Ovary (tissue), 10 donors: ENCODE measurements at regions of chr3 and their contacts with region 1.

Region 1: DNA sequence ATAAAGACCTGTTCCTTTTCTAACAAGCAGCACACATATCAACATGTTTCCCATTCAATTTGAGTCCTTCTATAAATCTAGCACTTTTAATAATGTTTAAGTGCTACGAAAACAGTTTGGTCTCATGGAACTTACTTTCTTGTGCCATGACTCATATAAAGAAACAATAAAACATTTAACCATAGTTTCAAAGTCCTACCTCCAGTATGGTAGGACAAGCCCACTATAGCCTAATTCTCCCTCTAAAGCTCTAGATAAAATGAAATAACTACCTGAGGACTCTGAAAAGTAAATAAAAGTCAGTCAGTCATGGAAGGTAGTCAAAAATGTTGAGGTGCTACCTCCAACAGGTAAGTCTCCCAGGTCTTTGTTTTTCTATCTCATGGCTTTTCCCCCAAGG is 12.0 kb upstream of the PIK3CA start:
- DNase-seq: no peak
- H3K4me3 ChIP-seq: no peak overlapping the region
- H3K27ac ChIP-seq: no peak overlapping the region
- H3K4me1 ChIP-seq: no peaks in the 10 kb centered on the region
- H3K27me3 ChIP-seq: no peaks in the 10 kb centered on the region
- CTCF ChIP-seq: no peak
- EP300 ChIP-seq: no peak
- POLR2A ChIP-seq: no peak

Region 2: DNA sequence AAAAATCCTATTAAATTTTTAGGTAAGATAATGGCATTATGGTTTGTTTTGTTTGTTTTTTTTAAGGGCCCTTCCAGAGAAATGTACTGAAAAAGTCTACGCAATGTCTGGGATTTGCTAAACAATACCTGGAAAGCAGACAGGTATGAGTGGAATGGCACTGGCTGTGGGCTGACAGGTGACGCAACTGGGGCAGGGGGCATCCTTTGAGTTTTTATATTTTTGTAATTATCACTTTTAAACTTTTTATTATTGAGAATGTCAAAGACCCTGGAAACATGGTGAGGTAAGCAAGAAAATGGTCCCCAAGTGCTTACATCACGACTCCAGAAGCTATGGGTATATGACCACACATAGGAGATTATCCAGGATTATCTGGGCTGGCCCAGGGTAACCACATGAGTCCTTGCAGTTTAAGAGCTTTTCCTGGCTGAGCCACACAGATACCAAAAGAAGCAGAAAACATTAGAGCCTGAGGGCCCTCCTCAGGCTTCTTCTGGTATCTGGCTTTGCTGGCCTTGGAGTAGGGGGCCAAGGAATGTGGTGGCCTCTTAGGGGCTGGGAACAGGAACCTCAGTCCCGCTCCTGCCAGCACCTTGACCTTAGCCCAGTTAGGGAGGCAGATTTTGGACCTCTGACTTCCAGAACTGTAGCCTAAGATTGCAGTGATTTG is 341.0 kb before region 1 on chr3:
- intact Hi-C with region 1: no loop called
- DNase-seq: no peak
- H3K4me3 ChIP-seq: no peak overlapping the region
- H3K27ac ChIP-seq: no peak overlapping the region
- H3K4me1 ChIP-seq: no peaks in the 10 kb centered on the region
- H3K27me3 ChIP-seq: no peaks in the 10 kb centered on the region
- CTCF ChIP-seq: no peak
- EP300 ChIP-seq: no peak
- POLR2A ChIP-seq: no peak

Region 3: DNA sequence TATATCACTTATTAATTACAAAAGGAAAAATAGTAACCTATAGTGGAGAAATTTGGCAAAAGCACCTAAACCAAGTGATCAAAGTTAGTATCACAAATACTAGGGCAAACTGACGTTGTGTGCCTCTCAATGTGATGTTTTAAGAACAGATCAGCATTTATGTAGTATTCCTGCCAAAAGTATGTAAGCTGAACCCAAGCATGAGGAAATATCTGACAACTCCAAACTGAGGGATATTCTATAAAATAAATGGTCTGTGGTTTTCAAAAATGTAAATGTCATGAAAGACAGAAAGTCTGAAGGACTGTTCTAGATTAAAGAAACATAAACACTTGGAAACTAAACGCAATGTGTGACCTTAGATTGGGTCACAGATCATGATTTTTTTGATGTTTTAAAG is 22.3 kb before region 1 on chr3:
- intact Hi-C with region 1: loop called in 1 of 4 experiments (anchors 2 kb)
- DNase-seq: no peak
- H3K4me3 ChIP-seq: no peak overlapping the region
- H3K27ac ChIP-seq: no peak overlapping the region
- H3K4me1 ChIP-seq: no peaks in the 10 kb centered on the region
- H3K27me3 ChIP-seq: no peaks in the 10 kb centered on the region
- CTCF ChIP-seq: no peak
- EP300 ChIP-seq: no peak
- POLR2A ChIP-seq: no peak